PC-9 (cell line): ENCODE measurements at regions of chr4 and their contacts with region 1.

Region 1: DNA sequence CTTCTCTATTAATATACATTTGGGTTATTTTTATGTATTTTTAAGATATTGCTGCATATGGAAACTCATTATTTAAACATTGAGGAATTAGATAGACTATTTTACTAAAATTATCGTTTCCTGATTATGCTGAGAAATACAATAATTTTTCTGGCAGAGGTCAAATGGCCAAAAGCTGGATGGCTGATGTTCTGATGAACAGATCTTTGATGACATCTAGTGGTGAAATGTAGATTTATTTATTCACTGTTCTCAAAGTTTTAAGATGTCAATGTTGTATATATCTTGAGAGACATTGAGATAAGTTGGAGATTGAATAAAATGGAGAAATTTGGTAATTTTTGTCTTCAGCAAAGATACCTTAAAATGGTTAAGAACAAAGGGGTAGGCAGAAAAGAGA is 96.2 kb downstream of the UGT8 start:
- DNase-seq: no peak
- H3K4me3 ChIP-seq: no peak overlapping the region
- H3K27ac ChIP-seq: no peak overlapping the region
- H3K4me1 ChIP-seq: no peaks in the 10 kb centered on the region
- H3K27me3 ChIP-seq: no peaks in the 10 kb centered on the region
- CTCF ChIP-seq: peak; percentile 68

Region 2: GRCh38 chr4:113289766-113290165 is 1405.0 kb before region 1 on chr4:
- CTCF ChIA-PET with region 1: no interaction called
- POLR2A ChIA-PET with region 1: no interaction called
- intact Hi-C with region 1: loop called (anchors 10 kb)
- DNase-seq: no peak
- H3K4me3 ChIP-seq: no peak overlapping the region
- H3K27ac ChIP-seq: no peak overlapping the region
- H3K4me1 ChIP-seq: no peaks in the 10 kb centered on the region
- H3K27me3 ChIP-seq: no peaks in the 10 kb centered on the region
- CTCF ChIP-seq: no peak

Region 3: GRCh38 chr4:114358901-114359300 is 335.9 kb before region 1 on chr4:
- CTCF ChIA-PET with region 1: no interaction called
- POLR2A ChIA-PET with region 1: no interaction called
- intact Hi-C with region 1: no loop called
- DNase-seq: no peak
- H3K4me3 ChIP-seq: no peak overlapping the region
- H3K27ac ChIP-seq: no peak overlapping the region
- H3K4me1 ChIP-seq: no peaks in the 10 kb centered on the region
- H3K27me3 ChIP-seq: no peaks in the 10 kb centered on the region
- CTCF ChIP-seq: no peak

Region 4: DNA sequence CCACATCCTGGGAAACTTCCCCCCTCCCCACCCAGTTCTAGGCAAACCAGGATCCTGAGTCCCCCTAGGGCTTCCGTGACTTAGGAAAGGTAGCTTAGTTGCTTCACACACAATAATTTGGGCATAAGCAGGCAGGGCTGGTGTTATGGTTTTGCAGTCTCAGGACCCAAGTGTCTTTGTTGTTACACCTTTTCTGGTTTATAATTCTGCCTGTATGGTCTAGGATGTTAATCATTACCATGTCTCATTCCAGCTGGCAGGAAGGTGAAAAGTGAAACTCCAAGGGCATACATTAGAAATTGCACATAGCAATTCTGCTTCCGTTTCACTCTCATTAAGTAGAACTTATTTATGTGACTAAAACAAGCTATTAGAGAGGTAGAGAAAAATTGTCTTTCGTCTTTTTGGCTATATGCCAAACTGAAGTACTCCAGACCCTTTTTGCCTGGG is 79.3 kb before region 1 on chr4:
- CTCF ChIA-PET with region 1: no interaction called
- POLR2A ChIA-PET with region 1: no interaction called
- intact Hi-C with region 1: no loop called
- DNase-seq: no peak
- H3K4me3 ChIP-seq: no peak overlapping the region
- H3K27ac ChIP-seq: no peak overlapping the region
- H3K4me1 ChIP-seq: no peaks in the 10 kb centered on the region
- H3K27me3 ChIP-seq: no peaks in the 10 kb centered on the region
- CTCF ChIP-seq: no peak